ENCODE measurements at regions of chr9 and their contacts with region 1.

Region 1: DNA sequence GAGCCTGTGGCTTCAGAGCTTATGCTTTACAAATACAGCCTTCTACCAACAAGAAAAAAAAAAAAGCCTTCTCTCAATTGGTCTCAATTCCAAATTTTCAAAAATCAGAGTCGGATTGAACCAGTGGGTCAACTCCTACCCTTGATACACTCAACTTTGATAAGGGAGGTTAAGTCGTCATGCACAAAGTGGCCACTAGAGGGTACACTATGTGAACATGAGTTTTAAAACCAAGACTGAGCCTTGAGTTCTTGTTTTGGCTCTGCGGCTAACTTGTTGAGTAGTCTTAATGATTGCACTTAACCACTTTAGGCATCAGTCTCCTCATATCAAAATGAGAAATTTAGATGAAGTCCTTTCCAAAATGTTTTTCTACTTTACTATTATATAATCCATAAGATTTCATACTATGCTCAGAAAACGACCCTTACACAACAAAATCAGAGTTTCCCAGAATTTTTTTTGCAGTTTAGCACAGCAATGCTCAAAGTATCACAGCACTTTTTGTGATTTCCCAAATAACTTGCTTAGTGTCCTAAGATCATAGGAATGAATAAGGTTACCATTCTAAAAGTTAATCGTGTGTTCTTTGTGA is 92.9 kb upstream of the MTAP start:
- DNase-seq: no peak
- H3K4me3 ChIP-seq: no peak overlapping the region
- H3K27ac ChIP-seq: no peak overlapping the region
- H3K27me3 ChIP-seq: no peaks in the 10 kb centered on the region
- CTCF ChIP-seq: peak; percentile 75

Region 2: GRCh38 chr9:21605489-21605931 is 104.1 kb before region 1 on chr9:
- CTCF ChIA-PET with region 1: no interaction called
- POLR2A ChIA-PET with region 1: no interaction called
- DNase-seq: peak; percentile 42
- H3K4me3 ChIP-seq: no peak overlapping the region
- H3K27ac ChIP-seq: no peak overlapping the region
- H3K27me3 ChIP-seq: no peaks in the 10 kb centered on the region
- CTCF ChIP-seq: no peak

Region 3: GRCh38 chr9:21688108-21689102 is 21.2 kb before region 1 on chr9:
- CTCF ChIA-PET with region 1: interaction called, 21 read pairs
- POLR2A ChIA-PET with region 1: no interaction called
- DNase-seq: no peak
- H3K4me3 ChIP-seq: peak overlapping the region; percentile 45
- H3K27ac ChIP-seq: peak overlapping the region; percentile 83
- H3K27me3 ChIP-seq: no peaks in the 10 kb centered on the region
- CTCF ChIP-seq: no peak

Region 4: GRCh38 chr9:21696411-21696873 is 13.1 kb before region 1 on chr9:
- CTCF ChIA-PET with region 1: interaction called, 21 read pairs
- POLR2A ChIA-PET with region 1: no interaction called
- DNase-seq: no peak
- H3K4me3 ChIP-seq: no peak overlapping the region
- H3K27ac ChIP-seq: no peak overlapping the region
- H3K27me3 ChIP-seq: no peaks in the 10 kb centered on the region
- CTCF ChIP-seq: 0 out of 2 replicates have a peak, but pooled peaks have one; percentile 20

Region 5: DNA sequence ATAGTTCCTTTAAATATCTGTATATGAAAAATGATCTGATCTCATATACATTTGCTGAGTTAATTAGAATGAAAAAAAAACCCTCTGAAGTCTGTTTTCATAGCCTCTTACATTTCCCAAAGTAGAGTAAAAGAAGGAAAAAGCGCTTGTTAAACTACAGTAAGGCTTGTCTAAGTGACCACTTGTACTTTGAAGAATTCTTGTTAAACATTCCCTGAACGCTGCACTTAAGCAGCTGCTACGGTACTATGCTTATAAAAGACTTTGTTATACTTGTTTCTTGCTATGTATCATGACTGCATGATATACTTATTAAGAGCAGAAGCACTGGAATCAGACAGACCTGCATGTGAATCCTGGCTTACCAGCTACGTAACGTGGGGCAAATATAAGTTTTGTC is 11.2 kb after region 1 on chr9:
- CTCF ChIA-PET with region 1: interaction called, 14 read pairs
- POLR2A ChIA-PET with region 1: no interaction called
- DNase-seq: no peak
- H3K4me3 ChIP-seq: no peak overlapping the region
- H3K27ac ChIP-seq: no peak overlapping the region
- H3K27me3 ChIP-seq: no peaks in the 10 kb centered on the region
- CTCF ChIP-seq: no peak

Measured in AG04450 (cell line).